Activated CD8-positive, alpha-beta T cell treated with anti-CD3 and anti-CD28 coated beads, Interleukin-2, amount 10 ng/mL, durations not matched to agents 7 days and 5 days (primary cell): ENCODE measurements at regions of chr11 and their contacts with region 1.

Region 1: GRCh38 chr11:64304316-64305072 is 830 bp upstream of the ESRRA start:
- DNase-seq: peak; percentile 97
- ATAC-seq: peak; percentile 45
- H3K4me3 Mint-ChIP-seq: peak overlapping the region; percentile 88
- H3K27ac Mint-ChIP-seq: peak overlapping the region; percentile 99
- H3K4me1 Mint-ChIP-seq: peaks cover 52% of the 10 kb centered on the region
- H3K27me3 Mint-ChIP-seq: peaks cover 15% of the 10 kb centered on the region

Region 2: DNA sequence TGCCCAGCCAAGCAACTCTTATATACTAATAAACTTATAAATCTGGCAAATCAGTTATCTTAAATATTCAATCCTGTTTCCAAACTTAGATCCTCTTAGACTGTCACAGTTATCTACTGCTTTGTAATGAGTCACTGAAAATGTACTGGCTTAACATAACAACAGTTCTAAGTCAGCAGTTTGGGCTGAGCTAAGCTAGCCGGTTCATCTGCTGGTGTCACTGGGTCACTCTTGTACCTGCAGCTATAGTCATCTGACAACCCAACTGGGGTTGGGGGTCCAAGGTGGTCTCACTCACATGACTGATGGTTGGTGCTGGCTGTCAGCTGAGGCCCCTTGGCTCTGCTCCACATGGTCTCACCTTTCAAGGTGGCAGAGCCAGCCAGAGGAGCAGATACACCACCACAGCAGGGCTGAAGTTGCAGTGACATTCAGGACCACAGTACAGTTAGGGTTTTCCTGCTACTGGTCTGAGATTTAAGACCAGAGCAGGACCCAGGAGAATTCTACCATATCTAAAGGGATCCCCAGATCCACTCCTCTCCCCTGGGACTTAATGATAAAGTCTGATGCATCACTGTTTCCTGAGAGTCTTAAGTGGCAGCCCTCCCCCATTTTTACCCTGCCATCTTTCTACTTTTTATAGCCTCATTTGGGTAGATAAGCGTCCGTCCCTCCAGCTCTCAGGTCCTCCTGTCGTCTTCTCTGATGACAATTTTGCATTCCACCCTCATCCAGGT is 130.7 kb before region 1 on chr11:
- CTCF ChIA-PET with region 1: no interaction called
- POLR2A ChIA-PET with region 1: no interaction called
- DNase-seq: no peak
- ATAC-seq: no peak
- H3K4me3 Mint-ChIP-seq: no peak overlapping the region
- H3K27ac Mint-ChIP-seq: no peak overlapping the region
- H3K4me1 Mint-ChIP-seq: peaks cover 21% of the 10 kb centered on the region
- H3K27me3 Mint-ChIP-seq: no peaks in the 10 kb centered on the region

Region 3: DNA sequence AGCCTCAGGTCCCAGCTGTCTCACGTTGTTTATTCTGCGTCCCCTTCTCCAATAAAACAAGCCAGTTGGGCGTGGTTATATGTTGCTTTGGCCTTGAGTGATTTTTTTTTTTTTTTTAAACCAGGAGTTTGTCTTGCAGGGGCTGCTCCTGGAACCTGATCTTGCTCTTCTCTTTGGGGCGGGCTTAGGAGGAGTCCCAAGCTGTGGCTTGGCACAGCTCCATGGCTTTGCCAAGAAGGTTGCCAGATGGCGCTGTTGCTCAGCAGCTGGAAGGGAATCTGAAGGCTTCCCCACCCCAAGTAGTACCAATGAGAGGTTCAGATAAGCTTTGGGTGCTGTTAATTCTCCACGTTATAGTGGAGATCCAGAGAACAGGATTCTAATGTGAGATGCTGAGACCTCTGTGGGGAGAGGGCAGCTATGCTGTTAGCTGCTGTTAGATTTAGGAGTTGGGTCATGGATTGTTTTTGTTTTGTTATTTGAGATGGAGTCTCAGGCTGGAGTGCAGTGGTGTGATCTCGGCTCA is 100.0 kb before region 1 on chr11:
- CTCF ChIA-PET with region 1: interaction called, 165 read pairs
- POLR2A ChIA-PET with region 1: interaction called, 41 read pairs
- DNase-seq: peak; percentile 82
- ATAC-seq: peak; percentile 43
- H3K4me3 Mint-ChIP-seq: peak overlapping the region; percentile 43
- H3K27ac Mint-ChIP-seq: peak overlapping the region; percentile 80
- H3K4me1 Mint-ChIP-seq: peaks cover 50% of the 10 kb centered on the region
- H3K27me3 Mint-ChIP-seq: no peaks in the 10 kb centered on the region

Region 4: DNA sequence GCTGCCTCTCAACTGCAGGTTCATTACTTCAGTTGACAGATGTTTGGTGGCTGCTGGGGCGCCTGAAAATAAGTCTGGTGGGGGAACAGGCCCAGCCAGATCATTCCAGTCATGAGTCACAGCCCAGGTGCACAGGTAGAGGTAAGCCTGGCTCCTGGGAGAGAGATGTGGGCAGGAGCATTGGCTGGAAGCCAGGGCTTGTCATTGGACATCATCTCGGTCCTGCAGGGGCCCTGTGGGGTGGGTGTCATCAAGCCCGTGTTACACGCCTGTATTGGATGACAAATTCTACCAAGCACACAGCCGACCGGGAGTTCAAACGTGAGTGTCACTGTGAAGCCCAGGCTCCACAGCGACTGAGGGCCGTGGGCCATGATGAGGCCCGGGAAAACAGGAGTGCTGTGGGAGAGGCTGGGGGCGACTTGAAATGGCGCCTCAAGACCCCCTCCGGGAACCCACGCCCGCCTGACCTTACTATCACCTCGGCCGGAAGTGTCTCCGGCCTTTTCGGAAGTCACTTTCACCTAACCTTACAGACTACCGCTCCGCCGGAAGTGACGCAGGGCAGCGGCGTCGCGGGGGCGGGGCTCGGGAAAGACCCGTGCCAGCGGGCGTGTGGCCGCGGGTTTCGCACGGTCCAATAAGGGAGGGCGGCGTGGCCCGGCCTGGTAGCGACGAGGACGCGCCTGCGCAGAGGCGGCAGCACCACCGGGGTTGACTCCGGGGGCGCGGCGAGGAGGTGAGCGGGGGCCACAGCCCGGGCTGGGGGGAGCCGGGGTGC is 63.9 kb before region 1 on chr11 and contains the start of gene FKBP2:
- CTCF ChIA-PET with region 1: interaction called, 27 read pairs
- POLR2A ChIA-PET with region 1: interaction called, 5 read pairs
- DNase-seq: peak; percentile 98
- ATAC-seq: peak; percentile 76
- H3K4me3 Mint-ChIP-seq: peak within 1 kb of the TSS; percentile 89
- H3K27ac Mint-ChIP-seq: peak within 1 kb of the TSS; percentile 98
- H3K4me1 Mint-ChIP-seq: peaks cover 44% of the 10 kb centered on the region
- H3K27me3 Mint-ChIP-seq: no peaks in the 10 kb centered on the region
- total RNA-seq, gene FKBP2: 26.9 to 33.0 TPM

Region 5: GRCh38 chr11:64269380-64270234 is 34.9 kb before region 1 on chr11:
- CTCF ChIA-PET with region 1: interaction called, 148 read pairs
- POLR2A ChIA-PET with region 1: interaction called, 42 read pairs
- DNase-seq: peak; percentile 97
- ATAC-seq: peak; percentile 74
- H3K4me3 Mint-ChIP-seq: peak overlapping the region; percentile 93
- H3K27ac Mint-ChIP-seq: peak overlapping the region; percentile 97
- H3K4me1 Mint-ChIP-seq: peaks cover 34% of the 10 kb centered on the region
- H3K27me3 Mint-ChIP-seq: no peaks in the 10 kb centered on the region

Region 6: DNA sequence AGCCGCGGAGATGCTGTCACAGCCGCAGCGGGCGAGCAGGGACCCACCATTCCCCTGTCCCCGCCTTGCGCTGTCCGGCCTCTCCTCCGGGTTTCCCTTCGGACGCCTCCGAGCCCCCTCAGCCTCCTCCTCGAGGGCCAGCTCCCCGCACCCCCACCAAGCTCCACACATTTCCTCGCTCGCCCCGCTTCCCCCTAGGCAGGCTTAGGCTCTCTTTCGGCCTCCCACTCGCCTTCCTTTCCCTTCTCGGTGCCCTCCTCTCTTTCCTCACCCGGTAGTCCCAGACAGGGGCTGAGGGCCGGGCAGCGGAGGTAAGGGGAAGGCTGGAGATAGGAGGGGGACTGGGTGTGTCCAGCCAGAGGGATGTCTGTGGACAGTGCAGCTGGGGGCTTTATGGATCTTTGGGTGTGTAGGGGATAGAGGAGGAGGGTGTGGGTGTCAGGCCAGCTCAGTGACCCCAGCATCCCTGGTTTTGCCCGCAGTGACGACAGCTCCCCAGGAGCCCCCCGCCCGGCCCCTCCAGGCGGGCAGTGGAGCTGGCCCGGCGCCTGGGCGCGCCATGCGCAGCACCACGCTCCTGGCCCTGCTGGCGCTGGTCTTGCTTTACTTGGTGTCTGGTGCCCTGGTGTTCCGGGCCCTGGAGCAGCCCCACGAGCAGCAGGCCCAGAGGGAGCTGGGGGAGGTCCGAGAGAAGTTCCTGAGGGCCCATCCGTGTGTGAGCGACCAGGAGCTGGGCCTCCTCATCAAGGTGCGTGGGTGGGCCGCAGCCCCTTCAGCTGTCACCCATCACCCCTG is 11.8 kb before region 1 on chr11:
- CTCF ChIA-PET with region 1: interaction called, 118 read pairs
- POLR2A ChIA-PET with region 1: interaction called, 4 read pairs
- DNase-seq: no peak
- ATAC-seq: peak; percentile 6
- H3K4me3 Mint-ChIP-seq: no peak overlapping the region
- H3K27ac Mint-ChIP-seq: no peak overlapping the region
- H3K4me1 Mint-ChIP-seq: peaks cover 17% of the 10 kb centered on the region
- H3K27me3 Mint-ChIP-seq: peaks cover 62% of the 10 kb centered on the region

Region 7: DNA sequence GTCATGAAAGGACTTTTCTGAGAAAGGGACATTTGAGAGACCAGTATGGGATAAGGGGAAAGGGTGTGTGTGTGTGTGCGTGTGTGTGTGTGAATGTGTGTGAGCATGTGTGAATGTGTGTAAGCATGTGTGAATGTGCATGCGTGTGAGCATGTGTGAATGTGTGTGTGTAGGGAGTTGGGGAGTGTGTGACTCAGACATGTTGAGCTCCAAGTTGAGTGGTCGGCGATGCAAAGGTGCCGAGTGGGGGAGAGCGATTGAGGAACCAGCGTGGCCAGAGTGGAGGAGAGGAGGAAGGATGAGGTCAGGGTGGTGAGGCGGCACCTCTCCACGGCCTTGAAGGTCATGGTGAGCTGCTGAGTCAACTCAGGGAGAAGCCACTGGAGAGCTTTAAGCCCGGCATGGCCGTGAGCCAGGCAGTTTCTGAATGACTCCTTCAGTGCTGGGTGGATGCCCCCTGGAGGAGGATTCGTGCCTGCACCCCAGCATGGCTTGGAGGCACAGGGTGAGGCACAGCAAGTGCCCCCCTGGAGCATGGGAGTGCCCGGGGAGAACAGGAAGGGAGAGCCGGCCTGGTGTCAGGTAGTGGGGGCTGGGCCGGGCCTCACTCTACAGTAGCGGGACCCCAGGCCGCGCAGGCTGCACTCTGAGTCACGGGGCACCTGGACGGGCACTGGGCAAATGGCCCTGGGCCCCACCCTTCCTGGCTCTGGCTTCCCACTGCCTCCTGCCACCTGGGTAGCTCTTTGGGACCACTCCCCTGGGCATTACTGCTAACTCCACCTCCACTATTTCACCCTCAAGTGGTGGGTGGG is 27.3 kb after region 1 on chr11:
- CTCF ChIA-PET with region 1: interaction called, 30 read pairs
- POLR2A ChIA-PET with region 1: no interaction called
- DNase-seq: peak; percentile 89
- ATAC-seq: peak; percentile 95
- H3K4me3 Mint-ChIP-seq: peak overlapping the region; percentile 1
- H3K27ac Mint-ChIP-seq: peak overlapping the region; percentile 86
- H3K4me1 Mint-ChIP-seq: peaks cover 38% of the 10 kb centered on the region
- H3K27me3 Mint-ChIP-seq: peaks cover 2% of the 10 kb centered on the region